K562 (cell line): ENCODE measurements at regions of chr18 and their contacts with region 1.

Region 1: GRCh38 chr18:68735483-68736343 is 20.8 kb upstream of the TMX3 start:
- DNase-seq: peak; percentile 14 to 31 (median 21)
- ATAC-seq: peak; percentile 53; the same call in 1 of the 3 replicates
- H3K4me3 ChIP-seq: no peak overlapping the region
- H3K27ac ChIP-seq: no peak overlapping the region
- H3K4me1 ChIP-seq: no peaks in the 10 kb centered on the region
- H3K27me3 ChIP-seq: no peaks in the 10 kb centered on the region
- CTCF ChIP-seq: peak; percentile 32 to 48 (median 47); a peak in 5 of 6 replicates
- EP300 ChIP-seq: no peak
- POLR2A ChIP-seq: no peak
- RAD21 ChIP-seq: peak; percentile 45 to 63

Region 2: GRCh38 chr18:67217551-67218166 is 1518.1 kb before region 1 on chr18:
- CTCF ChIA-PET with region 1: no interaction called
- POLR2A ChIA-PET with region 1: no interaction called
- in situ Hi-C with region 1: no loop called
- intact Hi-C with region 1: loop called (anchors 5 kb)
- DNase-seq: peak; percentile 8 to 44 (median 26)
- ATAC-seq: peak; percentile 58; the same call in 1 of the 3 replicates
- H3K4me3 ChIP-seq: no peak overlapping the region
- H3K27ac ChIP-seq: no peak overlapping the region
- H3K4me1 ChIP-seq: no peaks in the 10 kb centered on the region
- H3K27me3 ChIP-seq: no peaks in the 10 kb centered on the region
- CTCF ChIP-seq: peak; percentile 40 to 60 (median 44); a peak in 5 of 6 replicates
- EP300 ChIP-seq: no peak
- POLR2A ChIP-seq: no peak
- RAD21 ChIP-seq: peak; percentile 78 to 80